ENCODE measurements at regions of chr1 and their contacts with region 1.

Region 1: GRCh38 chr1:159188375-159188788 is 16.3 kb upstream of the ACKR1 start:
- DNase-seq: peak; percentile 89
- ATAC-seq: peak; percentile 97
- H3K4me3 Mint-ChIP-seq: peak overlapping the region; percentile 83
- H3K27ac Mint-ChIP-seq: peak overlapping the region; percentile 85
- H3K4me1 Mint-ChIP-seq: peaks cover 43% of the 10 kb centered on the region
- H3K27me3 Mint-ChIP-seq: peaks cover 3% of the 10 kb centered on the region
- CTCF ChIP-seq: no peak

Region 2: DNA sequence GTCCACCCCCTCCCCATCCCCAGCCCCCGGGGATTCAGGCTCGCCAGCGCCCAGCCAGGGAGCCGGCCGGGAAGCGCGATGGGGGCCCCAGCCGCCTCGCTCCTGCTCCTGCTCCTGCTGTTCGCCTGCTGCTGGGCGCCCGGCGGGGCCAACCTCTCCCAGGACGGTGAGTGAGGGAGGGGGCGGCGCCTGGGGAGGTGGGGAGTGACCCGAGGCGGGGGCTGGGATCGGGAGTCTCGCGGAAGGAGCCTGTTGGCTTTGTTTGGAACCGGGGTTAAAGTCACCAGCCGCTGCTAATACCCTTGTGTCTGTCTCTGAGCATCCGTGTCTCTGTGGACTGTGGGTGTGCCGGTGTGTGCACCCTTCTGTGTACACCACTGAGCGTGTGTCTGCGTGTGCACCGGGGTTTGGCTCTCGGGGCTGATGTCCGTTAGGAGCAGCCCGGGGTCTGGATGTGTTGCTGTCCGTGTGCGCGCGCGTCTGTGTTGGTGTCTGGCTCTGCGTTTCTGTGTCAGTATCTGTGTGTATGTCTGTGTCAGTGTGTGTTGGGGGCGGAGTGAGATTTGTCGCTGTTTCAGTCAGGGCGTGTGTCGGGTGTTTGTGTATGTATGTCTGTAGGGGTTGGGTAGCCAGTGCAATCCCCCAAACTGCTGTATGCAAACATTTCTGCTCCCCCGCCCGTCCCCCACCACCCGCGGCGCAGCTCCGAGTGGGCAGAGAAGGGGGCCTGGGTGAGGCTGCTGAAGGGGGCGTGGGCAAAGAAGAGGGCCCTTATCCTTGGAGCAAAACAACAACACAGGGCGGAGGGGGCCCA is 16.5 kb before region 1 on chr1:
- CTCF ChIA-PET with region 1: interaction called, 10 read pairs
- POLR2A ChIA-PET with region 1: interaction called, 6 read pairs
- DNase-seq: peak; percentile 68
- ATAC-seq: peak; percentile 30
- H3K4me3 Mint-ChIP-seq: peak overlapping the region; percentile 89
- H3K27ac Mint-ChIP-seq: no peak overlapping the region
- H3K4me1 Mint-ChIP-seq: peaks cover 17% of the 10 kb centered on the region
- H3K27me3 Mint-ChIP-seq: peaks cover 23% of the 10 kb centered on the region
- CTCF ChIP-seq: no peak

Region 3: GRCh38 chr1:159501082-159501481 is 312.7 kb after region 1 on chr1:
- CTCF ChIA-PET with region 1: no interaction called
- POLR2A ChIA-PET with region 1: no interaction called
- DNase-seq: no peak
- ATAC-seq: no peak
- H3K4me3 Mint-ChIP-seq: no peak overlapping the region
- H3K27ac Mint-ChIP-seq: no peak overlapping the region
- H3K4me1 Mint-ChIP-seq: no peaks in the 10 kb centered on the region
- H3K27me3 Mint-ChIP-seq: no peaks in the 10 kb centered on the region
- CTCF ChIP-seq: no peak

Measured in WTC11 (cell line).